Activated T-helper 1 cell treated with anti-CD3 and anti-CD28 coated beads, Interleukin-12 subunit alpha, Interleukin-12 subunit beta, Interleukin-2, Interleukin-4 antibody, amounts not matched to agents 30 ng/mL and 10 ng/mL and 1 ng/mL, durations not matched to agents 14 hours and 24 hours and 36 hours (primary cell): ENCODE measurements at regions of chrX and their contacts with region 1.

Region 1: GRCh38 chrX:2696698-2697215 is 5.7 kb downstream of the CD99 start:
- DNase-seq: peak; percentile 63
- H3K4me3 Mint-ChIP-seq: peak overlapping the region; percentile 99
- H3K27ac Mint-ChIP-seq: peak overlapping the region; percentile 99
- H3K4me1 Mint-ChIP-seq: peaks cover 86% of the 10 kb centered on the region
- H3K27me3 Mint-ChIP-seq: no peaks in the 10 kb centered on the region

Region 2: DNA sequence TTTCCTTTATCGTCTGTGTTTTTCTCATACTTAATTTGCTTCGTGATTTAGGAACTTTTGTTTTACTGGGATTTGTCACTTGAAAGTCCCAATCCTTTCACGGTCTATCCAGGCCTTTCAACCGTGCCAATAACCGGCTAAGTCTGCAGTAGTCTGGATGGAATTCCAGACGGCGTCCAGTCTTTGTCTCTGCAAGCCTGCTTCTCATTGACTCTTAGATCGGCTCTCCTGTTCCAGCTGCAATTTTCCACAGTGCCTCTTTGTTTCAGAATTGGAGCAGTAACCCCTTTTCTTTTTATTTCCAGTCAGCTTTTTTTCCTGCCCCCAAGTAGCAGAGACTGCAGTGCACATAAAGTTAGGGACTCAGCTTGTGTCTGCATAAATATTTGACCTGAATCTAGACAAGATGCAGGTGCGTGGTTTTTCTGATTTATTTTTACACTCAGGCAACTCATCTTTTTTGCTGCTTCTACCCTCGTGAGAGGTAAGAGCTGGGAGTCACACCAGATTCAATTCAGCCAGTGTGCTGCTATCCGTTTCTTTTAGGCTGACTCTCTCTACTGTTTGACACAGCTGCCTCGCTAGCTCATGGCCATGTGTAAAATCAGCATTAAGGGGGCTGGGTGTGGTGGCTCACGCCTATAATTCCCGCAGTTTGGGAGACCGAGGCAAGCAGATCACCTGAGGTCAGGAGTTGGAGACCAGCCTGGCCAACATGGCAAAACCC is 158.6 kb before region 1 on chrX:
- intact Hi-C with region 1: no loop called
- DNase-seq: no peak
- H3K4me3 Mint-ChIP-seq: no peak overlapping the region
- H3K27ac Mint-ChIP-seq: no peak overlapping the region
- H3K4me1 Mint-ChIP-seq: no peaks in the 10 kb centered on the region
- H3K27me3 Mint-ChIP-seq: no peaks in the 10 kb centered on the region

Region 3: GRCh38 chrX:2647627-2648026 is 49.1 kb before region 1 on chrX:
- intact Hi-C with region 1: loop called (anchors 1 kb)
- DNase-seq: no peak
- H3K4me3 Mint-ChIP-seq: peak overlapping the region; percentile 57
- H3K27ac Mint-ChIP-seq: peak overlapping the region; percentile 79
- H3K4me1 Mint-ChIP-seq: peaks cover 25% of the 10 kb centered on the region
- H3K27me3 Mint-ChIP-seq: no peaks in the 10 kb centered on the region

Region 4: GRCh38 chrX:2717312-2717711 is 20.6 kb after region 1 on chrX:
- intact Hi-C with region 1: loop called (anchors 1 kb)
- DNase-seq: no peak
- H3K4me3 Mint-ChIP-seq: peak overlapping the region; percentile 53
- H3K27ac Mint-ChIP-seq: peak overlapping the region; percentile 93
- H3K4me1 Mint-ChIP-seq: peaks cover 38% of the 10 kb centered on the region
- H3K27me3 Mint-ChIP-seq: no peaks in the 10 kb centered on the region